Naive thymus-derived CD8-positive, alpha-beta T cell (primary cell): ENCODE measurements at regions of chr14 and their contacts with region 1.

Region 1: GRCh38 chr14:92585981-92586937 is 72.7 kb downstream of the RIN3 start:
- DNase-seq: peak in 7 of 10 donors; percentile 24 to 77 (median 72)
- ATAC-seq: peak; percentile 81 to 85
- H3K4me3 Mint-ChIP-seq: peak overlapping the region; percentile 43 to 90 (median 70)
- H3K27ac Mint-ChIP-seq: peak overlapping the region; percentile 91 to 98 (median 95)
- H3K4me1 Mint-ChIP-seq: peaks cover 61 to 98% (median 97%) of the 10 kb centered on the region in 4 donors
- H3K27me3 Mint-ChIP-seq: no peaks in the 10 kb centered on the region

Region 2: DNA sequence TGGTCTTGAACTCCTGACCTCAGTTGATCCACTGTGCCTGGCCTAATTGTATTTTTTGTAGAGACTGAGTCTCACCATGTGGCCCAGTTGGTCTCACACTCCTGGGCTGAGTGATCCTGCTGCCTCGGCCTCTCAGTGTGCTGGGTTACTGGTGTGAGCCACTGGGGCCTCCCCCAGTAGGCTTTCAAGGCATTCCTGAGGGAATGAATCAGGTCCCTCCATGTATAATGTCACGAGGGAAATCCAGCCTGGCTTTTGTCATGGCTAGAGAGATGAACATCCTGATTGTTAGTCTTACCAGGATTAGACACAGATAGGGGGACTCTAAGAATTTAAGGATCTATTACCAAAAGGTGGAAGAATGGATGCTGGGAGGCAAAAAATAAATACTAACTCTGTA is 412.6 kb before region 1 on chr14:
- POLR2A ChIA-PET with region 1: interaction called, 11 read pairs
- DNase-seq: no peak
- ATAC-seq: no peak
- H3K4me3 Mint-ChIP-seq: no peak overlapping the region
- H3K27ac Mint-ChIP-seq: no peak overlapping the region
- H3K4me1 Mint-ChIP-seq: no peaks in the 10 kb centered on the region
- H3K27me3 Mint-ChIP-seq: no peaks in the 10 kb centered on the region

Region 3: GRCh38 chr14:92531106-92531873 is 55.0 kb before region 1 on chr14:
- POLR2A ChIA-PET with region 1: interaction called, 17 read pairs
- DNase-seq: peak; percentile 55 to 94 (median 86)
- ATAC-seq: peak; percentile 88 to 91
- H3K4me3 Mint-ChIP-seq: peak overlapping the region; percentile 68 to 92 (median 88)
- H3K27ac Mint-ChIP-seq: peak overlapping the region; percentile 97 to 100 (median 99)
- H3K4me1 Mint-ChIP-seq: peaks cover 38 to 91% (median 83%) of the 10 kb centered on the region in 4 donors
- H3K27me3 Mint-ChIP-seq: no peaks in the 10 kb centered on the region

Region 4: GRCh38 chr14:92556255-92556741 is 30.0 kb before region 1 on chr14:
- POLR2A ChIA-PET with region 1: interaction called, 24 read pairs
- DNase-seq: no peak
- ATAC-seq: peak; percentile 12 to 24
- H3K4me3 Mint-ChIP-seq: peak overlapping the region in 9 of 10 donors; percentile 11 to 78 (median 69)
- H3K27ac Mint-ChIP-seq: peak overlapping the region; percentile 45 to 92 (median 84)
- H3K4me1 Mint-ChIP-seq: peaks cover 32 to 80% (median 77%) of the 10 kb centered on the region in 4 donors
- H3K27me3 Mint-ChIP-seq: no peaks in the 10 kb centered on the region

Region 5: GRCh38 chr14:92568621-92569479 is 17.4 kb before region 1 on chr14:
- POLR2A ChIA-PET with region 1: interaction called, 13 read pairs
- DNase-seq: peak in 7 of 10 donors; percentile 21 to 66 (median 45)
- ATAC-seq: peak; percentile 84 to 87
- H3K4me3 Mint-ChIP-seq: peak overlapping the region; percentile 68 to 92 (median 86)
- H3K27ac Mint-ChIP-seq: peak overlapping the region; percentile 96 to 100 (median 99)
- H3K4me1 Mint-ChIP-seq: peaks cover 24 to 74% (median 69%) of the 10 kb centered on the region in 4 donors
- H3K27me3 Mint-ChIP-seq: no peaks in the 10 kb centered on the region

Region 6: DNA sequence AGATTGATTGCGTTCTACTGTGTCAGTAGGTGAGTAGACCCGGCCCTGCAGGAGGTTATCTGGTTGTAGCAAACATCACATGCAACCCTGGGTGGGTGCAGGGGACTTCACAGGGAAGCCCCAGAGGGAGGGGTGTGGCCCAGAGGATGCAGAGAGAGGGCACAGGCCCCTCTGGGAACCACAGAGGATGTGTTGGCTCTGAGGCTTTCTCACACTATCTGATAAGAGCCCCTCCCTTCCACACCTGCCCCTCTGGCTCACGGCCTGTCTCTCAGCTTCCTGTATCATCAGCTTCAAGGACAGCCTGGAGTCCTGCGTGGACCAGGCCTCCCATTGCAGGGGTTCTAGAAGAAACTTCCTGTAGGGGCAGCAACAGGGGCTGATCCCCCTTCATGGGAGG is 29.2 kb after region 1 on chr14:
- POLR2A ChIA-PET with region 1: no interaction called
- DNase-seq: peak; percentile 37 to 94 (median 80)
- ATAC-seq: peak; percentile 96 to 98
- H3K4me3 Mint-ChIP-seq: peak overlapping the region; percentile 59 to 83 (median 79)
- H3K27ac Mint-ChIP-seq: peak overlapping the region; percentile 90 to 97 (median 95)
- H3K4me1 Mint-ChIP-seq: peaks cover 19 to 70% (median 58%) of the 10 kb centered on the region in 4 donors
- H3K27me3 Mint-ChIP-seq: no peaks in the 10 kb centered on the region